Activated T-helper 2 cell treated with anti-CD3 and anti-CD28 coated beads, Interferon-gamma antibody, Interleukin-2, Interleukin-4, amounts not matched to agents 10 μg/mL and 5 μg/mL and 100 μg/mL, durations not matched to agents 14 hours and 24 hours and 36 hours (primary cell): ENCODE measurements at regions of chr9 and their contacts with region 1.

Region 1: DNA sequence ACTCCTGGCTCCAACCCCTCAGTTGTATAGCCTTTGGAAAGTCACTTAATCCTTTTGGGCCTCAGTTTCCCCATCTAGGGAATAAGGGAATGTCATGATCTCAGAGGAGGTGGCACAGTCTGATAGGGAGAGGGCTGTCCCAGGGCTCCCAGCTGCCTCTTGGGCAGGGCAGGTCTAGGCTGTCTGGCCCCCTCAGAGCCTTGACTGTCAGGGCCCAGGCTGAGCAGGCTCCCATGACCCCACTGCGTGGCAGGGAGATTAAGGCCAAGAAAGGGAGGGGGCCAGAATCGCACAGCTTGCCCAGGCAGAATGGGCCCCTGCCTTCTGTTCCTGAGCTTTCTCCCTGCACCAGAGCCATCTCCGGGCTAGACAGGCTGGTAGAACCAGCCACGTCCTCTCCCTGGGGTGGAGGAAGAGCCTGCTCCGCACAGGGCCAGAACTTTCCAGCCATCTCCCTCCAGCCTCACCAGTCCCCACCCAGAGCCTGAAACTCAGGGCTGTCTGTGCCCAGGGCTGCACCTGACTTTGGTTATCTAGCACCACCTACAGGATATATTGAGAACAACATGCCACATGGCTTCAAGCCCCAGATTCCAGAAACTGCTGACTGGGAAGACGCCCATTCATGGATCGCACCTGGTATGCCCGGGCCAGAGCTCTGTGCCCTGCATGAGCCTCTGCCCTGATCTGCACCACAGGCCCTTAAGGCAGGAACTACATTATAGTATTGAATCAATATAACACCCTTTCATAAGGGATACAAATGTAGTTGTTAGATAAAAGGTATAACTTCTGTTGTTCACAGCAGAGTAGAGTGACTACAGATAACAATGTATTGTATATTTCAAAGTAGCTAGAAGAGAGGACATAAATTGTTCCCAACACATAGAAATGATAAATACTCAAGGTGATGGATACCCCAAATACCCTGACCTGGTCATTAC is 32.0 kb downstream of the NAIF1 start:
- DNase-seq: peak; percentile 65
- H3K4me3 Mint-ChIP-seq: no peak overlapping the region
- H3K27ac Mint-ChIP-seq: no peak overlapping the region
- H3K4me1 Mint-ChIP-seq: peaks cover 24% of the 10 kb centered on the region
- H3K27me3 Mint-ChIP-seq: no peaks in the 10 kb centered on the region

Region 2: DNA sequence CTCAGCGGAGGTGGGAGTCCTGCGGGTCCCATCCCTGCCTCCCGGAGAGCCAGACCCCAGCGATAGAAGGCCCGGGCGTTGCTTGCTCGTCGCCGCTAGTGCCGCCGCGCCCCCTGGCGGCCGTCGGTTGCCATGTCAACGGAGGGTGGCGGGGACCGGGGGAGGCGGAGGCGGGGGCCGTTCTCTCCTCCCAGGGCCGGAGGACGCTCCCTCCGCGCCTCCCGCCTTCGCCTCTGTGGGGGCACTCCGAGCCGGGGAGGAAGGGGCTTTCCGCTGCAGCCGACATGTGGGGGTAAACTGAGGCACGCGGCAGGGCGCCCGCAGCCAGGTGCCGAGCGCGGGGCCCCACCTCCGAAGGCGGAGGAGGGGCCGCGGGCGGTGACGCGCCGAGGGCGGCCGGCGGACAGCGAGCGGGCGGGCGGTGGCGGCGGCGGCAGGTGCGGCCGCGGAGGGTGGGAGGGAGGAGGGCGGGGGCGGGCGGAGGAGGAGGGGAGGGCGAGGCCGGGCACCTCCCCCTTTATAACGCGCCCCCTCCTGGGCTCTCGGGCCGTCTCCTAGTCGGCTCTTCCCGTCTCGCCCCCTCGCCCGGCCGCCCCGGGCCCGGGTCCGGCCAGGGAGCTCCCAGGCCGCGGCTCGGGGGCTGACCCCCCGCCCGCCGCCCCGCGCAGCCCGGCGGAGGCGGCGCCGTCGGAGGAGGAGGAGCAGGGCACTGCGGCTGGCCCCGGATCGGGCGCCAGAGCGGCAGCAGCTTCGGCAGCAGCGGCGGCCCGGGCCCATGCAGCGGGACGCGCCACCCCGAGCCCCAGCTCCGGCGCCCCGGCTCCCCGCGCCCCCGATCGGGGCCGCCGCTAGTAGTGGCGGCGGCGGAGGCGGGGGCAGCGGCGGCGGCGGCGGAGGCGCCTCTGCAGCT is 249.8 kb before region 1 on chr9:
- intact Hi-C with region 1: loop called (anchors 5 kb)
- DNase-seq: peak; percentile 88
- H3K4me3 Mint-ChIP-seq: peak overlapping the region; percentile 97
- H3K27ac Mint-ChIP-seq: peak overlapping the region; percentile 86
- H3K4me1 Mint-ChIP-seq: peaks cover 56% of the 10 kb centered on the region
- H3K27me3 Mint-ChIP-seq: no peaks in the 10 kb centered on the region

Region 3: DNA sequence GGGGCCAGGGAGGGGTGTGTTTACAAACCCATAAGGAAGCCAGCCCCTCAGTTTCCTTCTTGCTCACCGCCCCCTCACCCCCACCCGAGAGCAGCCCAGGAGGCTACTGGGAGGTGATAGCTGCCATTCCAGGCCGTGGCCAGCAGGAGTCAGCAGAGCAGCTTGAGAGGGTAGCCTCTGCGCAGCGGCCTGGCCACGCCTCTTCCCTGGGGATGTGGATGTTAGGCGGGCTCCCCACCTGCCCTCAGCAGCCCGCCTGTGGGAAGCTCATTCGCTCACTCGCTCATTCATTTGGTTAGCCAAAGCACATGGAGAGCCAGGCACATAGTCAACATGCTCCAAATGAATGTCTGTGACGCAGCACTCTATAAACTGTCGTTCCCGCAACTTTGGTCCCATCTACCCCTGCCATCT is 91.4 kb before region 1 on chr9:
- intact Hi-C with region 1: loop called (anchors 1 kb)
- DNase-seq: peak; percentile 65
- H3K4me3 Mint-ChIP-seq: no peak overlapping the region
- H3K27ac Mint-ChIP-seq: peak overlapping the region; percentile 51
- H3K4me1 Mint-ChIP-seq: peaks cover 15% of the 10 kb centered on the region
- H3K27me3 Mint-ChIP-seq: no peaks in the 10 kb centered on the region

Region 4: GRCh38 chr9:127955294-127956035 is 79.6 kb before region 1 on chr9:
- intact Hi-C with region 1: loop called (anchors 1 kb)
- DNase-seq: peak; percentile 60
- H3K4me3 Mint-ChIP-seq: peak overlapping the region; percentile 22
- H3K27ac Mint-ChIP-seq: peak overlapping the region; percentile 65
- H3K4me1 Mint-ChIP-seq: peaks cover 61% of the 10 kb centered on the region
- H3K27me3 Mint-ChIP-seq: no peaks in the 10 kb centered on the region

Region 5: DNA sequence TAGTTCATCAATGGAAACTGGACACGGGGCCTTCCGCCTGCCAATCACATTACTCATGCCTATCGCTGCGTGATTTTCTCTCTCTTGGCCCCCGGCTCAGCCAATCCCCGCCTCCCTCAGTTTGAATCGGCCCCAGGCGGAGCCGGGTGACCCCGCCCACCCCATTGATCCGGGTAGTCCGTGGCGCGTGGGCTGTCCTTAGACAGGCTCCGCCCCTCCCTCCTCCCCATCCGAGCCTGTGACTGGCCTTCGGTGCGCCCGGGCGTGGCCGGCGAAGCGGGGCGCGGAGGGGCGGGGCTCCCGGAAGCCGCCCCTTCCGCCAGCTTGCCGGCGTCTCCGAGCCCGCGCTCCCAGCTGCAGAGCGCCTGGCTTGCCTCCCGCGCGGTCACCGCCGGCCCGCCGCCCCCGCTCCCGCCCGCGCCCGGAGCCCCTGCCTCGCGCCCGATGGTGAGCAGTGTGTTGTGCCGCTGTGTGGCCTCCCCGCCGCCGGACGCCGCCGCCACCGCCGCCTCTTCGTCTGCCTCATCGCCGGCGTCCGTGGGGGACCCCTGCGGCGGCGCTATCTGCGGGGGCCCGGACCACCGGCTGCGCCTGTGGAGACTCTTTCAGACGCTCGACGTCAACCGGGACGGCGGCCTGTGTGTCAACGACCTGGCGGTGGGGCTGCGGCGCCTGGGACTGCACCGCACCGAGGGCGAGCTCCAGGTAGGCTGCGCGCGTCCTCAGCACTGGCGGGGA is 33.0 kb after region 1 on chr9 and contains the start of gene SLC25A25:
- intact Hi-C with region 1: loop called (anchors 2 kb)
- DNase-seq: peak; percentile 100
- H3K4me3 Mint-ChIP-seq: peak within 1 kb of the TSS; percentile 93
- H3K27ac Mint-ChIP-seq: peak within 1 kb of the TSS; percentile 73
- H3K4me1 Mint-ChIP-seq: peaks cover 41% of the 10 kb centered on the region
- H3K27me3 Mint-ChIP-seq: no peaks in the 10 kb centered on the region
- total RNA-seq, gene SLC25A25: 11.3 and 11.9 TPM in 2 replicates